CD8-positive, alpha-beta T cell (primary cell): ENCODE measurements at regions of chr3 and their contacts with region 1.

Region 1: GRCh38 chr3:18444595-18445400 is 19.7 kb upstream of the SATB1 start:
- DNase-seq: peak; percentile 53 to 91 (median 78)
- ATAC-seq: peak; percentile 61
- H3K4me3 ChIP-seq: peak overlapping the region; percentile 81 to 91
- H3K4me3 Mint-ChIP-seq: peak overlapping the region; percentile 92
- H3K27ac ChIP-seq: peak overlapping the region; percentile 76 to 90
- H3K27ac Mint-ChIP-seq: peak overlapping the region; percentile 97
- H3K4me1 ChIP-seq: peaks cover 4% of the 10 kb centered on the region
- H3K4me1 Mint-ChIP-seq: peaks cover 48% of the 10 kb centered on the region
- H3K27me3 ChIP-seq: no peaks in the 10 kb centered on the region
- H3K27me3 Mint-ChIP-seq: no peaks in the 10 kb centered on the region
- CTCF ChIP-seq: no peak

Region 2: DNA sequence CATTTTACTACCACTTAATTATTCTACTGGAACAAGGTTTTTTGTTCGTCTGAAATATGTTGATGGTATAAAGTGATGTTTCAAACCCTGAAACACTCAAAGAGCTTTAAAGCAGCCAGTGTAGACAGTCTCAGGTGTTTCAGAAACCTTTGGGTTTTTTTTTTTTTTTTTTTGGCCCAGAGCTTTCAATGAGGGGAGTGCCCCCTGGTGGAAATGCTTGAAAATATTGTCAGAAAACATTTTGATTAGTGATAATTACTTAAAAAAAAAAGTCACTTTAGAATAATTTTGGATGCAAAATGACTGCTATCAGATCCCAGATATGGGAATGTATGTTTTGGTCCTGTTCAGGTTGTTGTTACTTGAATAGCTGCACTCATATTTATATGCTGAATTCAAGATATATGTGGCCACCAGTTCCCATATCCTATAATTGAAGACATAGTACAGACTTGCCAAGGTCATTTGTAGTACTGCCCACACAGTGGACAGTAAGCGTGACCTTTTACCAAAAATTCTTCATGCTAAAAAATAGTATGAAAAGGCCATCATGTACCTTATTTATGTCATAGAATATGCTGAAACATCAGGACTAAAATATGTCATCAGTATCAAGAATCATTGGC is 55.6 kb before region 1 on chr3:
- CTCF ChIA-PET with region 1: interaction called, 3 read pairs
- POLR2A ChIA-PET with region 1: interaction called, 3 read pairs
- intact Hi-C with region 1: loop called in 1 of 2 experiments (anchors 1 kb)
- DNase-seq: peak in 5 of 9 experiments; percentile 31 to 70 (median 38)
- ATAC-seq: peak; percentile 58
- H3K4me3 ChIP-seq: no peak overlapping the region
- H3K4me3 Mint-ChIP-seq: no peak overlapping the region
- H3K27ac ChIP-seq: no peak overlapping the region
- H3K27ac Mint-ChIP-seq: peak overlapping the region; percentile 57
- H3K4me1 ChIP-seq: peaks cover 68% of the 10 kb centered on the region
- H3K4me1 Mint-ChIP-seq: peaks cover 83% of the 10 kb centered on the region
- H3K27me3 ChIP-seq: no peaks in the 10 kb centered on the region
- H3K27me3 Mint-ChIP-seq: no peaks in the 10 kb centered on the region
- CTCF ChIP-seq: peak; percentile 91

Region 3: GRCh38 chr3:18419232-18419631 is 25.6 kb before region 1 on chr3:
- CTCF ChIA-PET with region 1: interaction called, 3 read pairs
- POLR2A ChIA-PET with region 1: interaction called, 35 read pairs
- intact Hi-C with region 1: loop called in 1 of 2 experiments (anchors 1 kb)
- DNase-seq: no peak
- ATAC-seq: no peak
- H3K4me3 ChIP-seq: peak overlapping the region in 1 of 2 experiments; percentile 7
- H3K4me3 Mint-ChIP-seq: peak overlapping the region; percentile 75
- H3K27ac ChIP-seq: peak overlapping the region; percentile 44 to 46
- H3K27ac Mint-ChIP-seq: peak overlapping the region; percentile 88
- H3K4me1 ChIP-seq: peaks cover 71% of the 10 kb centered on the region
- H3K4me1 Mint-ChIP-seq: peaks cover 87% of the 10 kb centered on the region
- H3K27me3 ChIP-seq: no peaks in the 10 kb centered on the region
- H3K27me3 Mint-ChIP-seq: no peaks in the 10 kb centered on the region
- CTCF ChIP-seq: no peak

Region 4: DNA sequence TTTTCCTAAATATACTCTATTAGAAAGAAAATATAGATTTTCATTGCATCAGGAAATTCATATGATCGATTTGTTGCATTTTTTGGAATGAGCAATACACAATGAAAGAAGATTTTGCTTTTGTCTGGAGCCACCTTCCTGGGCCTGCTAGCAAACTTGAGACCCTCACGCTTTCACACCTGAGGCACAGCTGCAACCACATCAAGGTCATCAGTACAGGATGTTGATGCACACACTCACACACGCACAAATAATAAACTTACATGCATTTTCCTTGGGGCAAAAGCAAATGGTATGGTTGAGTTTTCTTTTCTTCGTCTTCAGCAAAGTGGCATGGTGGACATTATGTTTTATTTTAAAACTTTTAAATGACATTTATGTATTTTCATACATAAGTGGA is 45.1 kb after region 1 on chr3:
- CTCF ChIA-PET with region 1: no interaction called
- POLR2A ChIA-PET with region 1: no interaction called
- intact Hi-C with region 1: loop called (anchors 2 to 5 kb)
- DNase-seq: peak in 6 of 9 experiments; percentile 12 to 72 (median 54)
- ATAC-seq: peak; percentile 46
- H3K4me3 ChIP-seq: no peak overlapping the region
- H3K4me3 Mint-ChIP-seq: peak overlapping the region; percentile 9
- H3K27ac ChIP-seq: no peak overlapping the region
- H3K27ac Mint-ChIP-seq: peak overlapping the region; percentile 78
- H3K4me1 ChIP-seq: peaks cover 24% of the 10 kb centered on the region
- H3K4me1 Mint-ChIP-seq: peaks cover 38% of the 10 kb centered on the region
- H3K27me3 ChIP-seq: no peaks in the 10 kb centered on the region
- H3K27me3 Mint-ChIP-seq: no peaks in the 10 kb centered on the region
- CTCF ChIP-seq: no peak

Region 5: DNA sequence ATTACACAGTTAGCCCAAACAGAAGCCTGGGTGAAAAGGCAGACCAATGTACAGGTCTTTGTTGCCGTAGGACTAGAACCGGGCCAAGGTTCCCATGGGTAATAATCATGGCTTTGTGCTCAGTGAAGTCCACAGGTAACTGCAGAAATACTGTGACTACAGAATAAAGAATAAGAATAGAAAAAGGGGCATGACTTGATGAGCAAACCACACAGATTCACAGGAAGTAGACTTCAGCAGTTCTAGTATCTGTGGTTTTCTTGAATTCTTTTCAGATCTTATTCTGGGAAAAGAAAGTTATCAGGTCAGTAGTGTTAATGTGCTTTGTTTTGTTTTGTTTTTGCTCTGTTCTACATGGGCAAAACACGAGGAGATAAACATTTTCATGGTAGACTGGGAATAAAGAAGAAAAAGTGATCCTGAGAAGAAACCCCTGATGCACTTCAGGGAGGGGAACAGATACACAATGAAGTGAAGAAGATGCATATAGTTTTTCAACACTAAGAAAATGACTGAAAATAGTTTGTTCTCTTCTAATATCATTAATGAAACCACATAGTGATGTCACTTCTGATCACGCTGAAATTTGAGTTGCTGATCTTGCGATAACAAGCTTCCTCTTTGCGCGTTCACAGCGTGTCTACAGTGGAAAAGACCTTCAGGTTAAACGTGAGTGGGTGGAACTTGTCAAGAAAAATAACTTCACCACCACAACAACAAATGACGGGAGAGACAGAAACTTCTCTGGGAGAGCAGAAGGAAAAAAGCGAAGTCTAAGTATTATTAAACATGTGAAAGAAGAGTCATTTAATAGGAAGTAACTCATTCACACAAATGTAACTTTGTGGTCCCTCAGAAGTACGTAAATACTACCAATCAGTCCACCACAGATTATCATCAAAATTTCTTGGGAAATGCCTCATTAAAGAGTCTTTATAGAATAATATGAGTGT is 296.1 kb after region 1 on chr3:
- CTCF ChIA-PET with region 1: interaction called, 3 read pairs
- POLR2A ChIA-PET with region 1: interaction called, 6 read pairs
- intact Hi-C with region 1: loop called in 1 of 2 experiments (anchors 1 kb)
- DNase-seq: peak; percentile 24 to 94 (median 51)
- ATAC-seq: peak; percentile 74
- H3K4me3 ChIP-seq: peak overlapping the region; percentile 23 to 31
- H3K4me3 Mint-ChIP-seq: peak overlapping the region; percentile 79
- H3K27ac ChIP-seq: peak overlapping the region; percentile 68 to 86
- H3K27ac Mint-ChIP-seq: peak overlapping the region; percentile 94
- H3K4me1 ChIP-seq: peaks cover 72% of the 10 kb centered on the region
- H3K4me1 Mint-ChIP-seq: peaks cover 84% of the 10 kb centered on the region
- H3K27me3 ChIP-seq: no peaks in the 10 kb centered on the region
- H3K27me3 Mint-ChIP-seq: no peaks in the 10 kb centered on the region
- CTCF ChIP-seq: no peak